K562 (cell line): ENCODE measurements at regions of chr16 and their contacts with region 1.

Region 1: DNA sequence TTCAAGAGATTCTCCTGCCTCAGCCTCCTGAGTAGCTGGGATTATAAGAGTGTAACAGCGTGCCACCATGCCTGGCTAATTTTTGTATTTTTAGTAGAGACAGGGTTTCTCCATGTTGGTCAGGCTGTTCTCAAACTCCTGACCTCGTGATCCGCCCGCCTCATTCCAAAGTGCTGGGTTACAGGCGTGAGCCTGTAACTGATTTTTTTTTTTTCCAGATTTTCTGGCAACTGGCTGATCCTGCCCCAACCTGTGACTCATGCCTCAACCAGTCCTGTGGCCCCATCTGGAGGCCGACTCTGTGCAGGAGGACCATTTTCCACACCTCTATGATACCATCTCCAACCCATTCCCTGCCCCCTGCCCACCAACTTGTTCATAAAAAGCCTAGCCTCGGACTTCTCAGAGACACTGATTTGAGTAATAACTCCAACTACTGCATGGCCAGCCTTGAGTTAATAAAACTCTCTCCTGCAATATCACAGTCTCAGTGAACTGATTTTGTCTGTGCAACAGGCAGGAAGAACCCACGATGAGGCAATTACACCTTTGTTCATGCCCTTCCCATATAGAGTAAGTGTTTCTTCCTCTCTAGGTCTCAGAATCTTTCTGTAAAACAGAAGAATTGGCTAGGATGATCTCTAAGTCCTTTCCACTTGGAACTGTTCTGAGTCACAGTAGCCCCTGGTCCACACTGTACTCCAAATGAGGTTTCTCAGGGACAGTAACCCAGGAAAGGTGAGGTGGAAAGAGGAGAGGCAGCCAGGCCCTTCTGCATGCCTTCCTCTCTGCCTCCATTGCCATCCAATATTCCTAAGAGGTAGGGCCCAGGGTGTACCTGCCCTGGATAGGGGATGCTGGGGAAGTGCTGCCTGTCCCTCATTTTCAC is 8.8 kb upstream of the CNOT1 start:
- DNase-seq: peak in 3 of 4 experiments; percentile 30 to 60 (median 37)
- ATAC-seq: peak; percentile 92
- H3K4me3 ChIP-seq: no peak overlapping the region
- H3K27ac ChIP-seq: no peak overlapping the region
- H3K4me1 ChIP-seq: no peaks in the 10 kb centered on the region; a peak in 1 of 5 replicates
- H3K27me3 ChIP-seq: no peaks in the 10 kb centered on the region; a peak in 1 of 5 replicates
- CTCF ChIP-seq: peak; percentile 49 to 64 (median 56); a peak in 5 of 6 replicates
- EP300 ChIP-seq: no peak
- POLR2A ChIP-seq: no peak
- RAD21 ChIP-seq: peak; percentile 38 to 67; a peak in 3 of 4 replicates

Region 2: DNA sequence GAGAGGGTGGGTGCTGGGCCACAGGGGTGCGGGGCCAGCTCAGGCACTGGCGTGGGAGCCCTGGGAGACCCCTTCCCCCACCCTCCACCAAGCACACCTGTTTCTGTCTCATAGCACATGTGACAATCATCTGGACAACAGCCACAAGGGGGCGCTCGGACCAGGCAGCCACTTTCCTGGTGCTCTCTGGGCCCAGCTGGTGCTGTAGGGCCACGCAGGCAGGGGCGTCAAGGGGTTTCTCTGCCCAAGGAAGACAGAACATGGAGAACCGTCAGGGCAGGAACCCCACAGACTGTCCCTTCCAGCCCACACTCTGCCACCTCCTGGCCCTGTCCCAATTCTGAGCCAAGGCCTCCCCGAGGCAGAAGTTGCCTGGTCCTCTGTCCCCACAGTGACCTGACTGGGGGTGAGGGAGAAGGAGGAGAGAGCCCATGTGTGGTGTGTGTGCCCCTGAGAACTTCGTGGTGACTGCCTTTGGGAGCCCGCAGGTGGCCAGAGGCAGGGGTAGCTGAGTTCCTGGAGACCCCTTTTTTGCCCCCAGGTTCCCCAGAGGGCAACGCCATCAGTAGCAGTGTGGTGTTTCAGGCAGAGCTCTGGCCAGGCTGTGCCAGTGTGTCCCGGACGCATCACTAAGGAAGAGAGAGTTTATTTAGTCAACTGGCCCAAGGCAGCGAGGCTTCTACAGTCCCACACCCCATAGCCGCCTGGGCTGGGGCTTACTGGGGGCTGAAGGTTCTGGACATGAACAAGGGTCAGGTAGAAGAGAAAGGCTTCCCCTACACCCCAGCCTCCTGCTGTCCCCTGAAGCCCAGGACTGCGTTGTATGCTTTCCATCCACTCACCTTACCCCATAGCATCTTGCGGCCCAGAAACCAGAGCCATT is 126.2 kb before region 1 on chr16:
- CTCF ChIA-PET with region 1: interaction called, 15 read pairs
- POLR2A ChIA-PET with region 1: interaction called, 3 read pairs
- in situ Hi-C with region 1: no loop called
- intact Hi-C with region 1: loop called (anchors 2 kb)
- DNase-seq: peak; percentile 58 to 89 (median 64)
- ATAC-seq: peak; percentile 64
- H3K4me3 ChIP-seq: no peak overlapping the region
- H3K27ac ChIP-seq: no peak overlapping the region
- H3K4me1 ChIP-seq: peaks cover 4 to 54% of the 10 kb centered on the region in 2 experiments; a peak in 4 of 5 replicates
- H3K27me3 ChIP-seq: no peaks in the 10 kb centered on the region
- CTCF ChIP-seq: peak; percentile 74 to 87 (median 86)
- EP300 ChIP-seq: no peak
- POLR2A ChIP-seq: no peak
- RAD21 ChIP-seq: peak; percentile 60 to 75